Activated T-helper 1 cell treated with anti-CD3 and anti-CD28 coated beads, Interleukin-12 subunit alpha, Interleukin-12 subunit beta, Interleukin-2, Interleukin-4 antibody, amounts not matched to agents 30 ng/mL and 10 ng/mL and 1 ng/mL, durations not matched to agents 14 hours and 24 hours and 36 hours (primary cell): ENCODE measurements at regions of chr3 and their contacts with region 1.

Region 1: DNA sequence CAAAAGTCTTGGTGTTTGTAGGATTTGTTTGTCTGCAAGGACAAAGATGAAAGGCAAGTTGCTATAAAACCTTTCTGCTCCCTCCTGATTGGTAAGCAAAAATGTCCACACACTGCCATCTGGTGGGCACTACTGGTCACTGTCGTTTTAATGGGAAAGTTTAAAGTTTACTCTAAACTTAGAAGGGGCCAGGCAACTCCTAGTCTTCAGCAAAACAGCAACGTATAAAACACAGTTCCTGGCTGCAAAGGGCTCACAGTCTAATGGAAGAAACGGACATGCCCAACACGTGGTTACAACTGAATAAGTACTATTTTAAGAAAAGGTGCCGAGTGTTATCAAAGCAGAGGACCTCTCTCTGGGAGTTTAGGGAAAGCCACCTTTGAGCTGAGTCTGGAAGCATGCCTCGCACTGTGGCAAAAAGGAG is 23.7 kb upstream of the TPRG1 start:
- DNase-seq: peak; percentile 43
- H3K4me3 Mint-ChIP-seq: no peak overlapping the region
- H3K27ac Mint-ChIP-seq: no peak overlapping the region
- H3K4me1 Mint-ChIP-seq: peaks cover 47% of the 10 kb centered on the region
- H3K27me3 Mint-ChIP-seq: peaks cover 6% of the 10 kb centered on the region

Region 2: DNA sequence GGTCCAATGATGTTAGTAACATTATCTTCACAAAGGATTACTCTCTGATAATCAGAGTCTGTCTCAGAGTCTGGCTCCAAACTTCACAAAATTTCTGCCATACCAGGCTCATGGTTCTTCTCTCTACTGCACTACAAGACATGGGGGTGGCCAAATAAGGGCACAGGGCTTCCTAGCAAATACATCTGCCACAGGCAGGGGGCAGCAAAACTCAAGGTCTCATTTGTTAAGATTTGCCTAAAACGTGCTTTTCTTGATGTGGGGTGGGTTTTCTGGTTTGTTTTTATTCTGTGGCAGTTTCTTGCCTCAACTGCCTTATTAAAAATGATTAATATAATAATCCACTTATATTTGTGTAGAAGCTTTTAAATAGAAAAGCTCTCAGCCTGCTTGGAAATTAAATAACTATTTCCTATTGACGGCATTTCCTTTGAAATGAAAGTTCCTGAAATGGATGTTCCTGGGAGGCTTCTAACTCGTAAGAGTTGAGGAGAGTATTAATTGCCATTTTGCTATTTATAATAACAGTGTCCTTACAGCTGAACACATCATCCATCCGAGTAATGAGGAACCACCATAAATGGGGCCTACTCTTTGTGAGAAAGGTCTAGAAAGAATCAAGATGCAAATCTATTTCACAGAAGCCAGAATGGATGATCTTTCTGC is 1531.7 kb before region 1 on chr3:
- intact Hi-C with region 1: loop called (anchors 5 kb)
- DNase-seq: peak; percentile 22
- H3K4me3 Mint-ChIP-seq: no peak overlapping the region
- H3K27ac Mint-ChIP-seq: no peak overlapping the region
- H3K4me1 Mint-ChIP-seq: no peaks in the 10 kb centered on the region
- H3K27me3 Mint-ChIP-seq: peaks cover 8% of the 10 kb centered on the region

Region 3: GRCh38 chr3:189195302-189195701 is 47.2 kb after region 1 on chr3:
- intact Hi-C with region 1: no loop called
- DNase-seq: no peak
- H3K4me3 Mint-ChIP-seq: no peak overlapping the region
- H3K27ac Mint-ChIP-seq: no peak overlapping the region
- H3K4me1 Mint-ChIP-seq: no peaks in the 10 kb centered on the region
- H3K27me3 Mint-ChIP-seq: peaks cover 2% of the 10 kb centered on the region

Region 4: DNA sequence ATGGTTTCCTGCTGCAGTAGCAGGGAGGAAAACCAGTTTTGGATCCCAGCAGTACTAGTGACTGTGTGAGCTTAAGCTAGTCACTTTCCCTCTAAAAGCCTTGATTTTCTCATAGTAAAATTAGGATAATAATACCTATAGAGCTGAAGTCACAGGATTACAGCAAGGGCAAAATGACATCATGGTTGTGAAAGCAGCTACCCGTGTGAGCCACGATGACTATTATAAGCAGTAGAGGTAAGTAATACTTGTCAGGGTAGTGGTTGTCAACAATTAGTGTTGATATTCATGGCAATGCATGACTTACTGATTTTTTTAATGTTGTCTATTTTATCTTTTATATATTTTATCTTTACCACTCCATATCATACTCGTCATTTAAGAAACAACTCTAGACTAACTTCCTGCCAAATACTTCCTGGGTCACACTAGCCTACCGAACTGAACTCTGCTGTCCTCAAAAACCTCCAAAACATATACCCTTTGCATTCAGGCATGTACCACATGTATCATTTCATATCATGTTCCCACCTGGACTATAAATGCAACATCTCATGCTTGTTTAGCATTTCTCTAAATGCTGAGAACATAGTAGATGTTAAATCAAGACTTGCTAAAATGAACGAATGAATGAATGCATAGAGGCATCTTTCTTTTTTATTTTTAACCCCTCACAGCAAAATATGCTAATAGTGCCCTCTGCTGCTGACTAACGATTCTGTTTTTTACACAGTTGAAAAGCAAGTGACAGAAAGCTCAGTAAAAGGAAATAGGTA is 800.0 kb after region 1 on chr3:
- intact Hi-C with region 1: loop called (anchors 2 kb)
- DNase-seq: no peak
- H3K4me3 Mint-ChIP-seq: no peak overlapping the region
- H3K27ac Mint-ChIP-seq: no peak overlapping the region
- H3K4me1 Mint-ChIP-seq: peaks cover 6% of the 10 kb centered on the region
- H3K27me3 Mint-ChIP-seq: peaks cover 3% of the 10 kb centered on the region